ENCODE measurements at regions of chr18 and their contacts with region 1.

Region 1: DNA sequence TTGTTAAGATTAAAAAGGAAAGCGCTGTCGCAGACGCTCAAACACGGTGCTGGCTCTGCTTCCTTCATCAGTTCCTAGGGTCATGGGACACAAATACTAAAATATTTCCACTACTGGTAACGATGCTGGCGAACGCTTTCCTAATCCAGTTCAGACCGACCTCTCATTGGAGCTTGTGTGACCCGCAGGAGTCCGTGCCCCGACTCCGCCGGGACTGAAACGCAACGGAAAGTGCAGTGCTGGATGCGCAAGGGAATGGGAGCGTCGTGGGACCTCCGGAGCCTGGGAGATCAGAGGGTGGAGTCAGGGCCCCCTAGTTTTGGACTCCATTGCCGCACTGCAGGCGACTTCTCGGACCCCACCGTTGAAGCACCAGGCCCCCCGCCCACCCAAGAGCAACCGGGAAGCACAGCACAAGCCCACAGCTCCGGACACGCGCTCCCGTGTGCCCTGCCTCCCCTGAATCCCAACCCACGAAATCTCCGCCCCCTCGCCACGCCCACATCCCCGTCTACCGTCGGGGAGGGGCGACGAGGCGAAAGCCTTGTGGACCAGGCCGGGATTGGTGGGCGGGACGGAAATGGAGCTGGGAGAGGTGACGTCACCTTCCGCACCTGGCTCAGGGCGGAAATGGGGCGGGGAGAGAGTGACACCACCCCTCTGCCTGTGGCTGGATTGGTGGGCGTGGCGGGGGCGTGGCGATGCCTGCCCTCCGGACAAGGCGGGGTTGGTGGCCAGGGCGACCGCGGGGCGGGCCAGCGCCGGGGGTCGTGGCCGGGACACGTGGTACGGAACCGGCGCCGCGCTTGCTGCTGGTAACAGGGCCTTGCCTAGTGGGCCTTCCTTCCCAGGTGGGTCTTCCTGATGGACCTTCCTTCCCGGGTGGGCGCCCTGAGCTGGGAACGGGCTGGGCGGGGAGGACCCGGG is at the start of gene CNDP2:
- DNase-seq: peak; percentile 100
- H3K4me3 Mint-ChIP-seq: peak within 1 kb of the TSS; percentile 98
- H3K27ac Mint-ChIP-seq: peak within 1 kb of the TSS; percentile 98
- H3K4me1 Mint-ChIP-seq: peaks cover 38% of the 10 kb centered on the region
- H3K27me3 Mint-ChIP-seq: no peaks in the 10 kb centered on the region
- total RNA-seq, gene CNDP2: 101 to 107 TPM

Region 2: DNA sequence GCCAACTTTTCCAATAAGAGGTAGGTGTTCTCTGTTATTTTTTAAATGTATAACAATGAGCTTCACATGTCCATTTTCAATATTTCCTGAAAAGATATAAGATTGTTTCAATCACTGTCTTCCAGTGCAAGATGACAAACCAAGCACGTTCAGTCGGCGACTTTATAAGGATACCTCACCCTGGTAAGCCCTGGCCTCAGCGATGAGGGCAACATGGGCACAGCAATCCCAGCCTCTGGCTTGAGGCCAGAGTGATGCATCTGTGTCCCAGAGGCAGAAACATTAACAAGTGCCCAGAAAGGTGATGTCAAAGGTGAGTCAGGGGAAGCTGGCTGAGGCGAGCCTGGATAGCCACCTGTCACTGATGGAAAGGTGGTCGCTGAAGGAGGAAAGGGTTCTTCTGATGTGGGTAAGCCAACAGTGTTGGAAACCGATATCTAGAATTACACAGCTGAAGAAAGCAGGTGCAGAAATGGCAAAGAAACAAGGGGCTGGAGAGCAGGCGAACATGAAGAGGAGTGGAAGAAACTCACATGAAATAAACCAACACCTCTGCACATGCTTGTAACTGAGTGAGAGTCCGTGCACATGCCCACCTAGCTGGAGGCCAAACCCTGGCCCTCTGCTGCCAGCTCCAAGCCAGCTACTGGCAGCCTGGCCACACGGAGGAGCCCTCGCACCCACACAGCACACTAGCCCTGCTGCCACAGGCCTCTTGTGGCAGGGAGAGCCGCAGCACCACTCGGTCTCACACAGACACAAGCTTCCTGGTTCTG is 413.7 kb before region 1 on chr18:
- CTCF ChIA-PET with region 1: interaction called, 4 read pairs
- intact Hi-C with region 1: loop called (anchors 5 kb)
- DNase-seq: peak; percentile 82
- H3K4me3 Mint-ChIP-seq: peak overlapping the region; percentile 71
- H3K27ac Mint-ChIP-seq: peak overlapping the region; percentile 87
- H3K4me1 Mint-ChIP-seq: peaks cover 16% of the 10 kb centered on the region
- H3K27me3 Mint-ChIP-seq: no peaks in the 10 kb centered on the region

Region 3: DNA sequence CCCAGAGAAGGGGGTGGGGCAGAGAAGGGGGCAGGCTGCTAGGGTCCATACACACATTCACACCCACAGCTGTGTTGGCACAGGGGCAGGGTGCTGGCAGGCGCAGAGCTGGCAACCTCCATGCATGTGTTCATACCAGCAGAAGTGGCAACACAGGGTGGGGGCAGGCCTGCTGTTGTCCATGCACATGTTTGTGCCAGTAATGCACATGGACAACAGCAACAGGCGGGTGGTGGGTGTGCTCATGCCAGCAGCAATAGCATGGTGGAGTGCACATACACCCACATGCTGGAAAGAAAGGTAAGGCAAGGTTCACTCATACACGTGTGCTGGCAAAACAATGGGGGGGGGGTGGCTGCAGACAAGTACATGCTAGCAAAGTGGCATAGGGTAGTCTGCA is 402.9 kb before region 1 on chr18:
- CTCF ChIA-PET with region 1: no interaction called
- intact Hi-C with region 1: no loop called
- DNase-seq: no peak
- H3K4me3 Mint-ChIP-seq: no peak overlapping the region
- H3K27ac Mint-ChIP-seq: no peak overlapping the region
- H3K4me1 Mint-ChIP-seq: no peaks in the 10 kb centered on the region
- H3K27me3 Mint-ChIP-seq: peaks cover 2% of the 10 kb centered on the region

Region 4: GRCh38 chr18:74255131-74255616 is 240.7 kb before region 1 on chr18:
- CTCF ChIA-PET with region 1: no interaction called
- intact Hi-C with region 1: no loop called
- DNase-seq: no peak
- H3K4me3 Mint-ChIP-seq: no peak overlapping the region
- H3K27ac Mint-ChIP-seq: no peak overlapping the region
- H3K4me1 Mint-ChIP-seq: no peaks in the 10 kb centered on the region
- H3K27me3 Mint-ChIP-seq: no peaks in the 10 kb centered on the region

Region 5: DNA sequence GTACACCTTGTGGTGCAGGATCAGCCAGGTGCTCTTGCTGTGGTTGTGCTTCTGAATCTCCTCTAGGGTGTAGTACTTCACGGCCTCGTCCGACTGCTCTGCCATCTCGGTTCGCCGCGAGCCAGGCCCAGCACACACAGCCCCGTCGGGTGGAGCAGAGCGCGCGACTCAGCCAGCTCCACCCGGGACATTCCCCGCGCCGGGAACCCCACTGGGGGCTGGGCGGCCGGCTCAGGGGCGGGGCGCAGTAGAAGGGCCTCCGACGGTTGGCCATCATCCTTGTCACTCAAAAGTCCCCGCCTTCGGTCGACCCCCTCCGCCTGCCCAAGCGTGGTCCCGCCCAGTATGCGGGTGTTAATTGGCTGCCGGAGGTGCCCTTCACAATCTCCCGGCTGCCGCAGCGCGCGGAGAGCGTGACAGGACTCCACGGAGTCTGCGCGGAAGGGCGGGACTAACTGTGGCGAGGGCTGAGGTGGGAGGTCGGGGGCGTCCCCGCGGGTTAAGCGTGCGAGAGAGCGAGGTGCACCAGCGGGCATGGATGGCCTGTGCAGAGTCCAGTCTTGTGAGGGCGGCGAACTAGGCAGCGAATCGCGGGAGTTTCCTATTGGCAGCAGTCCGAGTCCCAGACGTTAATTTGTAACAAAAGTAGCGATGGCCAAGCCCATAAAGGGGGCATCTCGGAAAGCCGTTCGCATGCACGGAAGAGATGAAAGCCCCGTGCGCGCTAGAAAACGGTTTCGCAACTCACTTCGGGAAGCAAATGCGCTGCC is 203.9 kb before region 1 on chr18 and contains the start of gene CYB5A:
- CTCF ChIA-PET with region 1: interaction called, 3 read pairs
- intact Hi-C with region 1: loop called (anchors 1 kb)
- DNase-seq: peak; percentile 99
- H3K4me3 Mint-ChIP-seq: no peak within 1 kb of the TSS
- H3K27ac Mint-ChIP-seq: peak within 1 kb of the TSS; percentile 59
- H3K4me1 Mint-ChIP-seq: peaks cover 20% of the 10 kb centered on the region
- H3K27me3 Mint-ChIP-seq: no peaks in the 10 kb centered on the region
- total RNA-seq, gene CYB5A: 77.8 to 78.3 TPM

Region 6: DNA sequence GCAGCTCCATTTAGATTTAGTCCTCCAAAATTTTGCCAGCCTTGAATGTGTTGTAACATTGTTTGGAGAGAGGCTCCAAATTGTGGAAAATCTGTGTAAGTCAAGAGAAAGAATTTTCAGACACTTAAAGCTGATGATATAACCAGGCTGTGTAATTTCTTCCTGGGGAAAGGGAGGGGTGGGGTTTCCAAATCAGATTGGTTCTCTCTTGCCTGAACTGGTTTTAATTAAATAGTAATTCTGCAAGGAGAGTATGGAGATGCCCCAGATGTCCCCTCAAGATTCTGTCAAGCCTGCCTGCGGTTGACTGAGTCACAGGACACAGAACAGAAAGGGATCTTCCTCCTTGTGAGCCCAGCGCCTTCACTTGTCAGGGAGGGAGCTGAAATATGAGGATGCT is 125.7 kb before region 1 on chr18:
- CTCF ChIA-PET with region 1: interaction called, 9 read pairs
- intact Hi-C with region 1: loop called (anchors 5 kb)
- DNase-seq: no peak
- H3K4me3 Mint-ChIP-seq: no peak overlapping the region
- H3K27ac Mint-ChIP-seq: no peak overlapping the region
- H3K4me1 Mint-ChIP-seq: peaks cover 46% of the 10 kb centered on the region
- H3K27me3 Mint-ChIP-seq: no peaks in the 10 kb centered on the region

Region 7: GRCh38 chr18:74551936-74552555 is 56.2 kb after region 1 on chr18:
- CTCF ChIA-PET with region 1: interaction called, 7 read pairs
- intact Hi-C with region 1: loop called (anchors 1 kb)
- DNase-seq: peak; percentile 88
- H3K4me3 Mint-ChIP-seq: no peak overlapping the region
- H3K27ac Mint-ChIP-seq: no peak overlapping the region
- H3K4me1 Mint-ChIP-seq: no peaks in the 10 kb centered on the region
- H3K27me3 Mint-ChIP-seq: peaks cover 2% of the 10 kb centered on the region

Region 8: GRCh38 chr18:74567822-74568221 is 72.0 kb after region 1 on chr18:
- CTCF ChIA-PET with region 1: no interaction called
- intact Hi-C with region 1: no loop called
- DNase-seq: peak; percentile 10
- H3K4me3 Mint-ChIP-seq: no peak overlapping the region
- H3K27ac Mint-ChIP-seq: no peak overlapping the region
- H3K4me1 Mint-ChIP-seq: no peaks in the 10 kb centered on the region
- H3K27me3 Mint-ChIP-seq: peaks cover 11% of the 10 kb centered on the region

Region 9: GRCh38 chr18:75247611-75248421 is 752.0 kb after region 1 on chr18:
- CTCF ChIA-PET with region 1: no interaction called
- intact Hi-C with region 1: loop called (anchors 10 kb)
- DNase-seq: peak; percentile 36
- H3K4me3 Mint-ChIP-seq: peak overlapping the region; percentile 77
- H3K27ac Mint-ChIP-seq: peak overlapping the region; percentile 93
- H3K4me1 Mint-ChIP-seq: peaks cover 60% of the 10 kb centered on the region
- H3K27me3 Mint-ChIP-seq: no peaks in the 10 kb centered on the region

Region 10: GRCh38 chr18:75691483-75691882 is 1195.6 kb after region 1 on chr18:
- CTCF ChIA-PET with region 1: no interaction called
- intact Hi-C with region 1: no loop called
- DNase-seq: no peak
- H3K4me3 Mint-ChIP-seq: no peak overlapping the region
- H3K27ac Mint-ChIP-seq: no peak overlapping the region
- H3K4me1 Mint-ChIP-seq: no peaks in the 10 kb centered on the region
- H3K27me3 Mint-ChIP-seq: peaks cover 10% of the 10 kb centered on the region